ENCODE measurements at regions of chr5 and their contacts with region 1.

Region 1: DNA sequence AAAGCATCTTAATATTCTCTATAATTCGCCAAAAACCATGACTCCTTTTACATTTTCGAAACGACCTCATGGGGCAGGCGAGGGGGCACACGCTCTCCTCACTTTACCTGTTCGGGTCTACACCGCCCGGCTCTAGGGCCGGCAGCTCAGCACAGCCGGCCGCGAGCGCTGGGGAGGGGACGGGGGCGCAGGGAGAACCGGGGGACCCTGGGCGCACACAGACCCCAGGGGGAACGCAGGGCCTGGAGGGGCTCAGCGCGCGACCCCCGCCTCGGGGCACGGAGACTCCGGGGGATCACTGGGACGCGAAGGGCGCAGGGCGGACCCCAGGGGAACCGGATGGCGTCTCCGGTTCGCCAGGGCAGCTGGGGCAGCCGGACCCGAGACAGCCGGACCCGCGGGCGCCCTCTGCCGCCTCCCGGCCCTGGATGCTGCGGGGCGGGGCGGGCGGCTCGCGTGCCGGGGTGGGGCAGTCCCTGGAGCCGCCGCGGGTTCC is at the start of gene AHRR:
- DNase-seq: peak; percentile 64
- H3K4me3 Mint-ChIP-seq: peak within 1 kb of the TSS; percentile 83
- H3K27ac Mint-ChIP-seq: peak within 1 kb of the TSS; percentile 44
- H3K4me1 Mint-ChIP-seq: peaks cover 14% of the 10 kb centered on the region
- H3K27me3 Mint-ChIP-seq: peaks cover 11% of the 10 kb centered on the region
- total RNA-seq, gene AHRR: 22.7 and 23.7 TPM in 2 replicates

Region 2: DNA sequence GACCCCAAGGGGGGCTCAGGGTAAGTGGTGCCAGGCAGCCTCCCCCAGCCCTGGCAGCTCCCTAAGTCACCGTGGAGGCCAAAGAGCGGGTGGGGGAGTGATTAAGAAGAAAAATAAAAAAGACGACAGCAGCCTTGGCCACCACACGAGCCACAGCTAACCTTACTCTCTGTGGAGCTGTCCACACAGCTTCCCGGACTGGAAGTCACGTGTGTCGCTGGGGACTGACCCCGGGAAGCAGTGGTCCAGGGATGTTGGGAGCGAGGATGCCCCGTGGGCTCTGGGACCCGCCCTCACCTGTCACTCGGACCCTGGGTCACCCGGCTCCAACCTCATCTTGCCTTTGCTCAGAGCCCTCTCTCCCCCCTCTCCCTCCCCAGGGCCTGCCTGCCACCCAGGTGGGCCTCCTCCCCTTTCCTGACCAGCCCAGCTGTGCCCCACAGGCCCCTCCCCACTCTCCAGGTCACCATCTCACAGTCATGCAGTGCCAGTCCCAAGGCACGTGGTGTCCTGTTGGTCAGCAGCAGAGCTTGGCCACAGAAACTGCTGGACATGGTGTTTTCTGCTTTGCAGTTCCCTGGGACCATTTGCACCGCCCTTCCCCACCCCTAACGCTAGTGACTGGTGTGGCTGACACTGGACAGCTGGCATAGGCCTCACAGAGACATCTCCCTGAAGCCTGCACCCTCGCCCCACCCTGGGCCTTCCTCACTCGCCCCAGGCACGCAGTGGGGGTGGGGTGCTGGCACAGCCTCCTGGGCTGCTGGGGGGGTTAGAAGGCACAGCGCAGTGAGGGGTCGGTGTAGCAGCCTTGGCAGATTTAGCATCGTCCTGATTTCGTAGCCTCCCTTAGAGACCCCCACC is 111.9 kb after region 1 on chr5:
- intact Hi-C with region 1: loop called (anchors 1 kb)
- DNase-seq: no peak
- H3K4me3 Mint-ChIP-seq: no peak overlapping the region
- H3K27ac Mint-ChIP-seq: no peak overlapping the region
- H3K4me1 Mint-ChIP-seq: no peaks in the 10 kb centered on the region
- H3K27me3 Mint-ChIP-seq: no peaks in the 10 kb centered on the region

Measured in activated T-helper 1 cell treated with anti-CD3 and anti-CD28 coated beads, Interleukin-12 subunit alpha, Interleukin-12 subunit beta, Interleukin-2, Interleukin-4 antibody, amounts not matched to agents 30 ng/mL and 10 ng/mL and 1 ng/mL, durations not matched to agents 14 hours and 24 hours and 36 hours (primary cell).